HEK293 (cell line): ENCODE measurements at regions of chrX and their contacts with region 1.

Region 1: GRCh38 chrX:51813886-51814460 is 70.7 kb downstream of the GSPT2 start:
- H3K4me3 ChIP-seq: no peak overlapping the region
- H3K27ac ChIP-seq: no peak overlapping the region
- H3K4me1 ChIP-seq: no peaks in the 10 kb centered on the region
- CTCF ChIP-seq: no peak

Region 2: DNA sequence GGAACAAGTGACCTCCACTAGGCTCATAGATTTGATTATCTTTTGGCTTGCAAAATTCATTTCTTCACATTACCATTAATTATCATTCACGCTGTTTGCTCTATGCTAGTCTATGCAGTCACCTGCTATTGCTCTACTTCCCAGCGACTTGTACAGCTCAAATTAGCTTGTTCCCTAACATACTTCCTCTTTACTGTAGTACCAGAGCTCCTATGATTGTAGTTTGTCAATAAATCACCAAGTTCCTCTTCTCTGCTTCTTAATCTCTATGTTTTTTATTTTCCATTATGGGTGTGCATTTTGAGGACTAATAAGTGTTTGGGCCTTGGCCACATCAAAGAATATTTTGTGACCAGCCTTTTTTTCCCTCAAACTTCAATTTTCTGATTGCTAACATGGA is 76.9 kb before region 1 on chrX:
- CTCF ChIA-PET with region 1: no interaction called
- POLR2A ChIA-PET with region 1: interaction called, 10 read pairs
- H3K4me3 ChIP-seq: no peak overlapping the region
- H3K27ac ChIP-seq: no peak overlapping the region
- H3K4me1 ChIP-seq: no peaks in the 10 kb centered on the region
- CTCF ChIP-seq: no peak